ENCODE measurements at regions of chr14 and their contacts with region 1.

Region 1: DNA sequence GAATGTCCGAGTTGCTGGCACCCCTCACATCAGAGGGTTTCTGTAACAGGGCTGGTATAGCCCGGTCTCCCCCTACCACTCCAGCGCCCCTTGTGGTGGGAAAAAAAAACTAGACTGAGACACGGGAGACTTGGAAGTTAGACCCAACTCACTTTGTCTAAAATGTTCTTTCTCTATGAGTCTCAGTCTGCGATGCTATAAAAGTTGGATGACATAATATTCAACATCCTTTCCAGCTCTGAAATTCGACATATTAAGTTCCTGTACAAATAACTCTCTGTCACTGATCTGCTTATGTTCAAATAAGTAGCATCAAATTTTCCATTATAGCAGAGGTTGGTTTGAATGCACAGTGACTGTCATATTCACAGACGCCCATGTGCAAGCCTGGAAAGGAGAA is 25.7 kb upstream of the TC2N start:
- DNase-seq: no peak
- ATAC-seq: no peak
- H3K4me3 ChIP-seq: no peak overlapping the region
- H3K27ac ChIP-seq: peak overlapping the region in 2 of 4 donors; percentile 78 to 84
- H3K4me1 ChIP-seq: peaks cover 26 to 52% (median 37%) of the 10 kb centered on the region in 3 donors
- H3K27me3 ChIP-seq: no peaks in the 10 kb centered on the region
- CTCF ChIP-seq: peak in 2 of 4 donors; percentile 10 to 36

Region 2: GRCh38 chr14:90903101-90903500 is 989.9 kb before region 1 on chr14:
- intact Hi-C with region 1: no loop called
- DNase-seq: peak in 3 of 6 donors; percentile 11 to 54 (median 30)
- ATAC-seq: peak; percentile 58 to 93 (median 90)
- H3K4me3 ChIP-seq: no peak overlapping the region
- H3K27ac ChIP-seq: no peak overlapping the region
- H3K4me1 ChIP-seq: no peaks in the 10 kb centered on the region
- H3K27me3 ChIP-seq: no peaks in the 10 kb centered on the region
- CTCF ChIP-seq: peak in 3 of 4 donors; percentile 41 to 54 (median 52)

Region 3: GRCh38 chr14:91755528-91756295 is 137.3 kb before region 1 on chr14:
- intact Hi-C with region 1: loop called in 1 of 3 experiments (anchors 10 kb)
- DNase-seq: no peak
- ATAC-seq: peak; percentile 36 to 71 (median 66)
- H3K4me3 ChIP-seq: no peak overlapping the region
- H3K27ac ChIP-seq: peak overlapping the region in 3 of 4 donors; percentile 56 to 75 (median 64)
- H3K4me1 ChIP-seq: peaks cover 47 to 67% (median 61%) of the 10 kb centered on the region in 3 donors
- H3K27me3 ChIP-seq: no peaks in the 10 kb centered on the region
- CTCF ChIP-seq: no peak

Region 4: GRCh38 chr14:91836119-91836881 is 56.7 kb before region 1 on chr14:
- intact Hi-C with region 1: loop called in 1 of 3 experiments (anchors 10 kb)
- DNase-seq: peak; percentile 94 to 99 (median 96)
- ATAC-seq: peak; percentile 83 to 92 (median 88)
- H3K4me3 ChIP-seq: peak overlapping the region; percentile 66 to 78 (median 70)
- H3K27ac ChIP-seq: peak overlapping the region; percentile 96 to 99 (median 97)
- H3K4me1 ChIP-seq: peaks cover 5 to 9% (median 9%) of the 10 kb centered on the region in 3 donors
- H3K27me3 ChIP-seq: no peaks in the 10 kb centered on the region
- CTCF ChIP-seq: no peak

Measured in pancreas (tissue), 10 donors.